Activated CD4-positive, alpha-beta T cell treated with anti-CD3 and anti-CD28 coated beads, Interleukin-2, amount 10 ng/mL, durations not matched to agents 24 days and 14 days (primary cell): ENCODE measurements at regions of chr12 and their contacts with region 1.

Region 1: GRCh38 chr12:92341065-92341668 is 195.5 kb upstream of the BTG1 start:
- DNase-seq: peak; percentile 62
- H3K4me3 Mint-ChIP-seq: peak overlapping the region; percentile 69
- H3K27ac Mint-ChIP-seq: no peak overlapping the region
- H3K4me1 Mint-ChIP-seq: peaks cover 16% of the 10 kb centered on the region
- H3K27me3 Mint-ChIP-seq: no peaks in the 10 kb centered on the region

Region 2: GRCh38 chr12:92297932-92298696 is 43.1 kb before region 1 on chr12:
- intact Hi-C with region 1: loop called (anchors 5 kb)
- DNase-seq: peak; percentile 76
- H3K4me3 Mint-ChIP-seq: peak overlapping the region; percentile 23
- H3K27ac Mint-ChIP-seq: peak overlapping the region; percentile 82
- H3K4me1 Mint-ChIP-seq: peaks cover 24% of the 10 kb centered on the region
- H3K27me3 Mint-ChIP-seq: no peaks in the 10 kb centered on the region

Region 3: DNA sequence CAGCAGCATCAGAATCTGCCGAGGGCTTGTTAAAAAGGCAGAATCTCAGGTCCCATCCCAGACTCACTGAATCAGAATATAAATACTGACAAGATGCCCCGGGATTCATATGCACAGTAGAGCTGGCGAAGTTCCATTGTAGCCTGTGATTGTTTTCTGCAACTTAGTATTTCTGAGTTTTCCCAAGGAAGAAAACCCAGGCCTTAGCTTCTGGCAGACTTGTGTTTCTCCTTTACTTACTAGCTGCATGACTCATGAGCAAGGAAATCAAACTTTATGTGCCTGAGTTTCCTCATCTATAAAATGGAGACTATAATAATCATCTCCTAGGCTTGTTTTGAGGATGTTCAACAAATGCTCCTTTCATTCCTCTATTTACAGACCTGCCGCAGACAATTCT is 83.2 kb after region 1 on chr12:
- intact Hi-C with region 1: no loop called
- DNase-seq: no peak
- H3K4me3 Mint-ChIP-seq: no peak overlapping the region
- H3K27ac Mint-ChIP-seq: no peak overlapping the region
- H3K4me1 Mint-ChIP-seq: peaks cover 9% of the 10 kb centered on the region
- H3K27me3 Mint-ChIP-seq: no peaks in the 10 kb centered on the region